HCT116 (cell line): ENCODE measurements at regions of chr4 and their contacts with region 1.

Region 1: DNA sequence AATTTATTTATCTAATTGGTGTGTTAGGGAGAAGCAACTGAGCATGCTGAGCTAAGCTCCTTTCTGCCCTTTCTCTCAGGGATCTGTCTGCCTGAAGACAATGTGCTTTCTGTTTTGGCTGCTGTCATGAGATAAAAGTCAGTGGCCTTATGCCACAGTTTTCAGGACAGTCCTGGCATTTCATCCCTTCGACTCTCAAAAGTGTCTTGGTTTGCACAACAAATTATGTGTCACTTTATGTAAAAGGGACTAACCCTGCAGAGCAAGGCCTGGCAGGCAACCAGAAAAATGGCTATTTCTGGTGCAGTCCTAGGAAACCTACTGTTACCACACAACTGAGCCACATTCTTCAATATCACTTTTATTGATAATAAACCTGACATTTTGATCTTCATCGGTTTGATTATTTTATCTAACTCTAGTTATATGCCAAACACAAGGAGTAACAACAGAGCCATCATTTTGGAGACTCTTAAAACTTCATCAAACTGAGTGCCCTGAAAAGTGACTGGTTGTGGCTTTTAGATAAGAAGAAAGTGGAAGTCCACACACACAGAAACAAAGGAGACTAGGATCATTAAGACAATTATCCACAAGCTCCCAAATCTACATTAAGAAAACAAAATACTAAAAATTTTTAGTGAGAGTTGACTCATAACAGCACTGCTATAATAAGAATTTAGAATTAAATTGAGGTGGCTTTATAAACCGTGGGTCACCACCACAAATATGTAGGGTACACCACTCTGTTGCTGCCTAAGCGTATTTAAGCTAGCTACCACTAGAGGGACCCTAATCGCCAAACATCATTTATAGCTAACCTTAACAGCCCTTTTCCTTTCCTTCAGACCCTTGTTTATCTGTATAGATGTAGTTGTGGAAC is 95.9 kb upstream of the PTPN13 start:
- DNase-seq: peak; percentile 47
- ATAC-seq: peak; percentile 97
- H3K4me3 ChIP-seq: no peak overlapping the region
- H3K27ac ChIP-seq: no peak overlapping the region
- H3K4me1 ChIP-seq: peaks cover 8% of the 10 kb centered on the region in 2 experiments; a peak in 3 of 4 replicates
- H3K27me3 ChIP-seq: no peaks in the 10 kb centered on the region
- CTCF ChIP-seq: peak; percentile 61 to 84 (median 80); a peak in 5 of 6 replicates
- POLR2A ChIP-seq: no peak
- RAD21 ChIP-seq: peak; percentile 72

Region 2: DNA sequence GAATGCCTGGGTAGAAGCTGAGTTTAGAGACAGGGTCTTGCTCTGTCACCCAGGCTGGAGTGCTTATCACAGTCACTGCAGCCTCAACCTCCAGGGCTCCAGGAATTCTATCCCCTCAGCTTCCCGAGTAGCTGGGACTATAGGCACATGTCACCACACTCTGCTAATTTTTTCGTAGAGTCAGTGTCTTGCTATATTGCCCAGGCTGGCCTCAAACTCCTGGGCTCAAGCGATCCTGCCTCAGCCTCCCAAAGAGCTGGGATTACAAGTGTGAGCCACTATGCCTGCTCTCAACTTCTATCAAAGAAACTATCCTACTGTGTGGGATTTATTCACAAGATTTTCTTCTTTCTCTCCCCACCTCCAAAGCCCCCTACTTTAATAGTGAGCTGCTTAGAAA is 154.1 kb before region 1 on chr4:
- CTCF ChIA-PET with region 1: no interaction called
- POLR2A ChIA-PET with region 1: no interaction called
- RAD21 ChIA-PET with region 1: no interaction called
- intact Hi-C with region 1: no loop called
- DNase-seq: no peak
- ATAC-seq: no peak
- H3K4me3 ChIP-seq: no peak overlapping the region
- H3K27ac ChIP-seq: no peak overlapping the region
- H3K4me1 ChIP-seq: peaks cover 0 to 3% of the 10 kb centered on the region in 2 experiments; a peak in 2 of 4 replicates
- H3K27me3 ChIP-seq: no peaks in the 10 kb centered on the region
- CTCF ChIP-seq: no peak
- POLR2A ChIP-seq: no peak
- RAD21 ChIP-seq: no peak

Region 3: DNA sequence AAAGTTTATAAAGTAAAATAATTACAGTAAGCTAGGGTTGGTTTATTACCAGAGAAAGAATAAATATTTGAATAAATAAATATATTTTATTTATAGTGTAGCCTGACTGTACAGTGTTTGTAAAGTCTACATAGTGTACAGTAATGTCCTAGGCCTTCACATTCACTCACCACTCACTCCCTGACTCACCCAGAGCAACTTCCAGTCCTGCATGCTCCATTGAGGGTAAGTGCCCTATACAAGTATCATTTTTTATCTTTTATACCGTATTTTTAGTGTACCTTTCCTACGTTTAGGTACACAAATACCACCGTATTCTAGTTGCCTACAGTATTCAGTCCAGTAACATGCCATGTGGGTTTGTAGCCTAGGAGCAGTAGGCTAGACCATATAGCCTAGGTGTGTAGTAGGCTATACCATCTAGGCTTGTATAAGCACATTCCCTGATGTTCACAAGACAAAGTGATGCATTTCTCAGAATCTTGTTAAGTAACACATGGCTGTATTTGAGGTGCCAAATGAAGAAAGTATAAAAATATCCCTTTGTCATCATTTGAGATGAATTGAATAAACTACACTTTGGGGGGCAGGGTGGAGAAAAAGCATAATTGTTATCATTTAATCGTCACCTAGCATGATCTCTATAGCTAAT is 736.9 kb after region 1 on chr4:
- CTCF ChIA-PET with region 1: no interaction called
- POLR2A ChIA-PET with region 1: no interaction called
- RAD21 ChIA-PET with region 1: no interaction called
- intact Hi-C with region 1: loop called (anchors 10 kb)
- DNase-seq: no peak
- ATAC-seq: peak; percentile 21; the same call in 1 of the 2 replicates
- H3K4me3 ChIP-seq: peak overlapping the region in 1 of 2 experiments; percentile 55; a peak in 1 of 4 replicates
- H3K27ac ChIP-seq: no peak overlapping the region
- H3K4me1 ChIP-seq: peaks cover 0 to 10% of the 10 kb centered on the region in 2 experiments; a peak in 2 of 4 replicates
- H3K27me3 ChIP-seq: no peaks in the 10 kb centered on the region
- CTCF ChIP-seq: no peak
- POLR2A ChIP-seq: no peak
- RAD21 ChIP-seq: no peak

Region 4: DNA sequence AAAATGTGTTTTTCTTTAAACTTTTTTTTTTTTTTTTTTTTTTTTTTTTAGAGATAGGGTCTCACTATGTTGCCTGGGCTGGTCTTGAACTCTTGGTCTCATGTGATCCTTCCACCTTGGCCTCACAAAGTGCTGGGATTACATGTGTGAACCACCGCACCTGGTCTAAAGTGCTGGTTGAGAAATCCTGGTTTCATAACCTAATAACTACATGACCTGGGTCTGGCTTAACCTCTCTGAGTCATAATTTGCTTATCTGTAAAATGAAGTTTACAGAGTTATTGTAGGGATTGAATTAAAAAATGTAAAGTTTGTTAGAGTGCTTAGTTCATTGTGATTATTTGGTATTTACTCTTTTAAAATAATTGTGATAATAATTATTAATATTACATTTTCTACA is 819.3 kb after region 1 on chr4:
- CTCF ChIA-PET with region 1: no interaction called
- POLR2A ChIA-PET with region 1: no interaction called
- RAD21 ChIA-PET with region 1: no interaction called
- intact Hi-C with region 1: no loop called
- DNase-seq: no peak
- ATAC-seq: no peak
- H3K4me3 ChIP-seq: no peak overlapping the region
- H3K27ac ChIP-seq: no peak overlapping the region
- H3K4me1 ChIP-seq: no peaks in the 10 kb centered on the region
- H3K27me3 ChIP-seq: no peaks in the 10 kb centered on the region
- CTCF ChIP-seq: no peak
- POLR2A ChIP-seq: no peak
- RAD21 ChIP-seq: no peak